Endothelial cell of umbilical vein (primary cell): ENCODE measurements at regions of chr5 and their contacts with region 1.

Region 1: DNA sequence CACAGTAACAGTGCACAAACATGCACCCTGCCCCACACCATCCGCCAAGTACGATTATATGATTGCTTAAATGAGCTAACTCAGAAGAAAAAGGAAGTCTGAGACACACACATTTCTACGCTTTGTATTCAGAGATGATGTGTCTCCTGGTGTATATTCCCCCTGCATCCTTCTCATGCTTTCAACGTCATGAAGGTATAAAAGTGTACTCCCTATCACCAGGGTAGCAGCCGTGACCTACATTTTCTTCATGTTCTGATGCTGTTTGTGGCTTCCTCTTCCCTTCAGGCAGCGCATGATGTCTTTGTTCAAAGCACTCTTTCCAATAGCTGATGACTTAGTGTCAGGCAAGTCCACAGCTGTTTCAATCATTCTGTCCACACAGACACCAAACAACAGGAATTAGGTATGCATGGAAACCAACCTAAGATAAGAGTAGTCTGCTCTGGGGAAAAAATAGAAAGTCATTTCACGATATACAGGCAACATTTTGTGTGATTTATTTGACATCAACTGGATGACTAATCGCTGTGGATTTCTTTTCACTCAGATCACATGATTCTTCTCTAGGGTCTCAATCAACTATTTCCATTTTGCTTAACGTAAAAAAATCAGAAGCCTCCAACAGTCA is 269.4 kb upstream of the PTGER4 start:
- DNase-seq: peak; percentile 97
- H3K4me3 ChIP-seq: peak overlapping the region in 1 of 3 experiments; percentile 24
- H3K27ac ChIP-seq: peak overlapping the region; percentile 81
- H3K4me1 ChIP-seq: peaks cover 24% of the 10 kb centered on the region
- H3K27me3 ChIP-seq: no peaks in the 10 kb centered on the region
- CTCF ChIP-seq: no peak
- POLR2A ChIP-seq: peak; percentile 13

Region 2: DNA sequence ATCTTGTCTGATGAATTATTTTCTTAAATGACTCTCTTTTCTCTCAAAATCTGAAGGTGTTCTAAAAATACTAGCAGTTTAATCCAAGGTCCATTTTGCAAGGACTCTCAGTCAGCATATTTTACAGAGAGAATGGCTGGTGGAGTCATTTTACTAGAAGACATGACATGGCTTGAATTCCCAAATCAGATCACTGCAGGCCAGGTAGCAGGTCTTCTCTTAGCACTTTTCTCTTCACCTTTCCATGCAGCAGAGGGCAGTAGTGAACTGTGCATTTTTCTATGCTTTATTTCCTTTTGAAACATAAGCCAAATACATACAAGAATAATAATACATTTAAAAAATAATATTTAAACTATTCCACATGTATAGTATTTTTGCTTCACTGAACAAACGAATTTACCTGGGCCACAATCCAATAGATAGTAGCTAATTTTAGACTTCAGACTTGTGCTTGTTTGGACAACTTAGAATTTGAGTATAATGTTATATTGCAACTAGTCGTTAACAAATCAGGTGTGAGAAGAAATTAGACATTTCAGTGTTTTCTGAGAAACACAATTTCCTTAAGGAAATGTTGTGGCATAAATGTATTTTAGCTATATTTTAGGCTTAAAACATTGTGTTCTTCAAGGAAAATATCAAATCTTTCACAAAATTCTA is 696.2 kb before region 1 on chr5:
- CTCF ChIA-PET with region 1: no interaction called
- POLR2A ChIA-PET with region 1: no interaction called
- dilution Hi-C with region 1: no loop called
- intact Hi-C with region 1: loop called (anchors 10 kb)
- DNase-seq: peak; percentile 84
- H3K4me3 ChIP-seq: no peak overlapping the region
- H3K27ac ChIP-seq: no peak overlapping the region
- H3K4me1 ChIP-seq: no peaks in the 10 kb centered on the region
- H3K27me3 ChIP-seq: no peaks in the 10 kb centered on the region
- CTCF ChIP-seq: peak; percentile 42 to 65
- POLR2A ChIP-seq: no peak

Region 3: GRCh38 chr5:40121236-40121635 is 289.1 kb before region 1 on chr5:
- CTCF ChIA-PET with region 1: no interaction called
- POLR2A ChIA-PET with region 1: interaction called, 12 read pairs
- dilution Hi-C with region 1: no loop called
- intact Hi-C with region 1: no loop called
- DNase-seq: no peak
- H3K4me3 ChIP-seq: no peak overlapping the region
- H3K27ac ChIP-seq: no peak overlapping the region
- H3K4me1 ChIP-seq: no peaks in the 10 kb centered on the region
- H3K27me3 ChIP-seq: no peaks in the 10 kb centered on the region
- CTCF ChIP-seq: no peak
- POLR2A ChIP-seq: no peak

Region 4: GRCh38 chr5:40198736-40199135 is 211.6 kb before region 1 on chr5:
- CTCF ChIA-PET with region 1: interaction called, 5 read pairs
- POLR2A ChIA-PET with region 1: no interaction called
- dilution Hi-C with region 1: no loop called
- intact Hi-C with region 1: loop called (anchors 1 kb)
- DNase-seq: peak; percentile 87
- H3K4me3 ChIP-seq: no peak overlapping the region
- H3K27ac ChIP-seq: peak overlapping the region; percentile 33
- H3K4me1 ChIP-seq: peaks cover 33% of the 10 kb centered on the region
- H3K27me3 ChIP-seq: no peaks in the 10 kb centered on the region
- CTCF ChIP-seq: no peak
- POLR2A ChIP-seq: no peak

Region 5: GRCh38 chr5:40383749-40384651 is 26.3 kb before region 1 on chr5:
- CTCF ChIA-PET with region 1: no interaction called
- POLR2A ChIA-PET with region 1: no interaction called
- dilution Hi-C with region 1: no loop called
- intact Hi-C with region 1: loop called (anchors 1 kb)
- DNase-seq: peak; percentile 15
- H3K4me3 ChIP-seq: no peak overlapping the region
- H3K27ac ChIP-seq: no peak overlapping the region
- H3K4me1 ChIP-seq: peaks cover 11% of the 10 kb centered on the region
- H3K27me3 ChIP-seq: no peaks in the 10 kb centered on the region
- CTCF ChIP-seq: no peak
- POLR2A ChIP-seq: no peak

Region 6: GRCh38 chr5:40428126-40428525 is 17.8 kb after region 1 on chr5:
- CTCF ChIA-PET with region 1: interaction called, 11 read pairs
- POLR2A ChIA-PET with region 1: interaction called, 3 read pairs
- dilution Hi-C with region 1: no loop called
- intact Hi-C with region 1: loop called (anchors 1 kb)
- DNase-seq: peak; percentile 51
- H3K4me3 ChIP-seq: no peak overlapping the region
- H3K27ac ChIP-seq: no peak overlapping the region
- H3K4me1 ChIP-seq: peaks cover 22% of the 10 kb centered on the region
- H3K27me3 ChIP-seq: no peaks in the 10 kb centered on the region
- CTCF ChIP-seq: no peak
- POLR2A ChIP-seq: no peak

Region 7: GRCh38 chr5:40464511-40464910 is 54.2 kb after region 1 on chr5:
- CTCF ChIA-PET with region 1: no interaction called
- POLR2A ChIA-PET with region 1: no interaction called
- dilution Hi-C with region 1: no loop called
- intact Hi-C with region 1: loop called (anchors 2 kb)
- DNase-seq: peak; percentile 59
- H3K4me3 ChIP-seq: no peak overlapping the region
- H3K27ac ChIP-seq: no peak overlapping the region
- H3K4me1 ChIP-seq: peaks cover 21% of the 10 kb centered on the region
- H3K27me3 ChIP-seq: no peaks in the 10 kb centered on the region
- CTCF ChIP-seq: no peak
- POLR2A ChIP-seq: no peak